Adrenal gland (tissue), 19 donors: ENCODE measurements at regions of chr13 and their contacts with region 1.

Region 1: GRCh38 chr13:43143591-43143990 is 120.2 kb downstream of the DNAJC15 start:
- DNase-seq: no peak
- H3K4me3 ChIP-seq: no peak overlapping the region
- H3K27ac ChIP-seq: no peak overlapping the region
- H3K4me1 ChIP-seq: no peaks in the 10 kb centered on the region
- H3K27me3 ChIP-seq: no peaks in the 10 kb centered on the region
- CTCF ChIP-seq: no peak
- POLR2A ChIP-seq: no peak

Region 2: GRCh38 chr13:42883771-42884467 is 259.7 kb before region 1 on chr13:
- intact Hi-C with region 1: loop called in 1 of 2 experiments (anchors 10 kb)
- DNase-seq: peak; percentile 31 to 78 (median 61)
- H3K4me3 ChIP-seq: no peak overlapping the region
- H3K27ac ChIP-seq: no peak overlapping the region
- H3K4me1 ChIP-seq: peaks cover 8 to 11% of the 10 kb centered on the region in 2 donors
- H3K27me3 ChIP-seq: no peaks in the 10 kb centered on the region
- CTCF ChIP-seq: peak; percentile 9 to 58 (median 34)
- POLR2A ChIP-seq: no peak